Activated B cell treated with CpG ODN at 0.5 μM for 24 hours (primary cell): ENCODE measurements at regions of chr20 and their contacts with region 1.

Region 1: DNA sequence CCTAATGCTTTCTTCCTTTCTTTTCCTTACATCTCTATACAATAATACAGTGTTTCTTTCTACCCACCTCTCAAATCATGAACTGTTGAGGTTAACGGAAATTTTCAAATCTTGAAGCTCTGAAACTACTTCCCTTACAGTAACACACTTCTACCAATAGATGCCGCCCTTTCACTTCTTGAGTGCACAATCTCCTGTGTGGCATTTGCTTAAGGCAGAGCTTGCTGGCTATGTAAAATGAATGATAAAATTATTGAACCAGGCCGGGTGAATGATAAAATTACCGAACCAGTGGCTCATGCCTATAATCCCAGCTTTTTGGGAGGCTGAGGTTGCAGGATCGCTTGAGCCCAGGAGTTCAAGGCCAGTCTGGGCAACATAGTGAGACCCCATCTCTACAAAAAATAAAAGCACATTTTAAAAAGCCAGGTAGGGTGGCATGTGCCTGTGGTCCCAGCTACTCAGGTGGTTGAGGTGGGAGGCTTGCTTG is 56.8 kb downstream of the KCNS1 start:
- DNase-seq: no peak
- ATAC-seq: peak; percentile 93
- H3K4me3 Mint-ChIP-seq: no peak overlapping the region
- H3K27ac Mint-ChIP-seq: peak overlapping the region; percentile 1
- H3K4me1 Mint-ChIP-seq: peaks cover 68% of the 10 kb centered on the region
- H3K27me3 Mint-ChIP-seq: no peaks in the 10 kb centered on the region
- CTCF ChIP-seq: peak; percentile 38

Region 2: DNA sequence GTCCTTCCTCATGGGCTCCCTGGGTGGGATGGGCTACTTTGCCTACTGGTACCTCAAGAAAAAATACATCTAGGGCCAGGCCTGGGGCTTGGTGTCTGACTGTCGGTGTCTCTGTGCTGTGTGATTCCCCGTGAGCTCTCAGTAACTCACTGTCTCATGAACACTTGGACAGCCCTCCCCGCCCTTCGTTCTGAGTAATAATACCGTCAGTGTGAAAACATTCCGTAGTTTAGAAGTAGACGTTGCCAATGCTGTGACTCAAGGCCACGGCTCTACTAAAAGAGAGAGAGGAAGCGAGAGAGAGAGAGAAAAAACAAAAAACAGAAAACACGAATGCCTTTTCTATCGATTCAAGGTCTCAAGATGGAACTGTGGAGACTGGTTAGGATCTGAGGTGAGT is 764.9 kb before region 1 on chr20:
- CTCF ChIA-PET with region 1: no interaction called
- POLR2A ChIA-PET with region 1: no interaction called
- intact Hi-C with region 1: no loop called
- DNase-seq: no peak
- ATAC-seq: no peak
- H3K4me3 Mint-ChIP-seq: no peak overlapping the region
- H3K27ac Mint-ChIP-seq: no peak overlapping the region
- H3K4me1 Mint-ChIP-seq: no peaks in the 10 kb centered on the region
- H3K27me3 Mint-ChIP-seq: no peaks in the 10 kb centered on the region
- CTCF ChIP-seq: no peak

Region 3: GRCh38 chr20:45028424-45029136 is 15.5 kb before region 1 on chr20:
- CTCF ChIA-PET with region 1: interaction called, 11 read pairs
- POLR2A ChIA-PET with region 1: no interaction called
- intact Hi-C with region 1: no loop called
- DNase-seq: no peak
- ATAC-seq: no peak
- H3K4me3 Mint-ChIP-seq: no peak overlapping the region
- H3K27ac Mint-ChIP-seq: no peak overlapping the region
- H3K4me1 Mint-ChIP-seq: peaks cover 30% of the 10 kb centered on the region
- H3K27me3 Mint-ChIP-seq: no peaks in the 10 kb centered on the region
- CTCF ChIP-seq: no peak

Region 4: DNA sequence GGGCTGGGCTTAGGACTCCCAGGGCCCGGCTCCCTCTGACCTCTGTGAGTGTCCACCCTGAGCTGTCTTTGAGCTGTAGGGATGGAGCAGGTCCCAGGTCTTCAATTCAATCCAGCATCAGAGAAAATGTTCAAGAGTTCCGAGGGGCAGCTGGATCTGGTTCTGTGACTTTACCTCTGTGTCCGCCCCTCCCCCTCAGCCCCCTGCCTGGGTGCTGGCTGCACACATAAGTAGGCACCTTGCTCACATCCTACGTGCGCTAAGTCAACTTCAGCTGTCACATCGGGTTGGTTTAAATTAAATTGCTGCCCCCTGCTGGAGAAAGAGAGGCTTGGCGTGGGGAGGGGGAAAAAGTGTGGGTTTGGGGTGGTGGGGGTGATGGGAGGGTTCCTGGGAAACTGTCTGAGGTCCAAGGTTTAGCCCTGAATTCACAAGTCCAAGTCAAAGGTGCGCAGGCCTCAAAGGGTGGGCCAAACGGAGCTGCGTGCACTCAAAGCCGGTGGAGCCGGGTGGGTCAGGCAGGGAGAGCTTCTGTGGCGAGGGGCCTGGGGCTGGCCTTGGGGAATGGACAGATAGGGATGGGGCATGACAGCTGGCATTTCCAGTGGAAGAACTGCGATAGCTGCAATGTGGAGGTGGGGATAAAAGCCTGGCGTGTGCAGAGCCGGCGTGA is 67.8 kb after region 1 on chr20:
- CTCF ChIA-PET with region 1: interaction called, 16 read pairs
- POLR2A ChIA-PET with region 1: no interaction called
- intact Hi-C with region 1: loop called (anchors 1 kb)
- DNase-seq: no peak
- ATAC-seq: no peak
- H3K4me3 Mint-ChIP-seq: no peak overlapping the region
- H3K27ac Mint-ChIP-seq: no peak overlapping the region
- H3K4me1 Mint-ChIP-seq: no peaks in the 10 kb centered on the region
- H3K27me3 Mint-ChIP-seq: peaks cover 9% of the 10 kb centered on the region
- CTCF ChIP-seq: no peak

Region 5: DNA sequence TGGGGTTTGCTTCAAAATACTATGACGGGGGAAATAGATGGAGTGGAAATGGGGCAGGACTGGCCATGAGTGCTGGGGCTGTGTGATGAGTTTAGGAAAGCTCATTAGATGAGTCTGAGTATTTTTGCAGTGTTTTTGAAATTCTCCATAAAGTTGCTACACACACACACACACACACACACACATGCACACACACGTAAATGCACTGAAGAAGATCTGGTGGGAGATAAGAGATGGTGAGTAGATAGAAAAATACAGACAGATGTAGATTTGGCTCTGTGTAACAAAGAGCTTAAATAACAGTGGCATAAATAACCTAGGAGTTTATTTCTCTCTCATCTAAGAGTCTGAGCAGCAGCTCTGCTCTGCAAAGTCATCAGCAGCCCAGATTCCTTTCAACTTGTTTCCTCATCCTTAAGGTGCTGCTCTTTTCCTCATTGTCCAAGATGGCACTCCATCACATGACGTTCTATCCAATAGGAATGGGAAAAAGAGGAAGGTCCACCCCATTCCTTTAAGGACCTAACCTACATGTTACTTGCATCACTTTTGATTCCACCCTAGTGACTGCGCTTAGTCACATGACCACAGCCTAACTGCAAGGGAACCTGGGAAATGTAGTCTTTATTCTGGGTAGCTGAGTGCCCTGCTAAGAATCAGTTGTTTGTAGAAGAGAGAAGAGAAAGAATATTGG is 1926.9 kb after region 1 on chr20:
- CTCF ChIA-PET with region 1: no interaction called
- POLR2A ChIA-PET with region 1: no interaction called
- intact Hi-C with region 1: no loop called
- DNase-seq: no peak
- ATAC-seq: no peak
- H3K4me3 Mint-ChIP-seq: no peak overlapping the region
- H3K27ac Mint-ChIP-seq: no peak overlapping the region
- H3K4me1 Mint-ChIP-seq: no peaks in the 10 kb centered on the region
- H3K27me3 Mint-ChIP-seq: peaks cover 14% of the 10 kb centered on the region
- CTCF ChIP-seq: no peak